ENCODE measurements at regions of chr4 and their contacts with region 1.

Region 1: DNA sequence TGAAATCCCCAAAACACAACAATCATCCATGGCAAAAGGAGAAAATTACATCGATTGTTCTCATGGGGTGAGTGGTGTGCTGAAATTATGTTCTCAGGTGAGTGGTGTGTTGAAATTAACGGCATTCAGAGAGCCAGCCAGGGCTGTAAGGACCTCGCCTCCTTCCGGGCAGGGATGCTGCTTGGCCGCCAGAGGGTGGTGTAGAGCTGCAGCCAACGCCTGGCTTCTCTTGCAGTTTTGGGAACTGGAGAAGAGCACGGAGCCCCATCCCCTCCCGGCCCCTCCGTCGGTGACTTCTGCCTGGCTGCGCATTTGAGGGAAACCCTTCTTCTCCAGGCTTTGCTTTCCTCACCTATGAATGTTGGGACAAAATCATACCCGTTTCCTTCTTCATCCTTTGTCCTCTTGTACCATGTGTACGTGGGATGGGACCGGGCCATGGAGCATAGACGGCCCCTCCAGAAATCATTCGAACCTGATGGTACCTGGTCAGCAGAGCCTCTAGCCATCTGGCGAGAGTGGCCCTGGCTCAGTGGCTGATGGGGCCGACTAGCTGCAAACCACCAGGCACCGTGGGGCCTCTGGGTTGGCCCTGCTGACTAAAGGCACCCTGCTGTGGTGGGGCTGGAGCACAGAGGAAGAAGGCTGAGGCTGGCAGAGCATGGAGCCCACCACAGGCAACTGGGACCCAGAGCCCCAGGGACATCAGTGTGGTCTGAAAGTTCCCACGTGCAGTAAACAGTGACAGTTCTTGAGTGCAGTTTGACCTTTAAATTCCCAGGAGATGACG is 28.4 kb downstream of the TRMT44 start:
- DNase-seq: no peak
- H3K4me3 ChIP-seq: no peak overlapping the region
- H3K27ac ChIP-seq: no peak overlapping the region
- H3K4me1 ChIP-seq: peaks cover 28% of the 10 kb centered on the region
- H3K27me3 ChIP-seq: no peaks in the 10 kb centered on the region
- CTCF ChIP-seq: peak; percentile 50 to 93 (median 83)
- POLR2A ChIP-seq: no peak

Region 2: DNA sequence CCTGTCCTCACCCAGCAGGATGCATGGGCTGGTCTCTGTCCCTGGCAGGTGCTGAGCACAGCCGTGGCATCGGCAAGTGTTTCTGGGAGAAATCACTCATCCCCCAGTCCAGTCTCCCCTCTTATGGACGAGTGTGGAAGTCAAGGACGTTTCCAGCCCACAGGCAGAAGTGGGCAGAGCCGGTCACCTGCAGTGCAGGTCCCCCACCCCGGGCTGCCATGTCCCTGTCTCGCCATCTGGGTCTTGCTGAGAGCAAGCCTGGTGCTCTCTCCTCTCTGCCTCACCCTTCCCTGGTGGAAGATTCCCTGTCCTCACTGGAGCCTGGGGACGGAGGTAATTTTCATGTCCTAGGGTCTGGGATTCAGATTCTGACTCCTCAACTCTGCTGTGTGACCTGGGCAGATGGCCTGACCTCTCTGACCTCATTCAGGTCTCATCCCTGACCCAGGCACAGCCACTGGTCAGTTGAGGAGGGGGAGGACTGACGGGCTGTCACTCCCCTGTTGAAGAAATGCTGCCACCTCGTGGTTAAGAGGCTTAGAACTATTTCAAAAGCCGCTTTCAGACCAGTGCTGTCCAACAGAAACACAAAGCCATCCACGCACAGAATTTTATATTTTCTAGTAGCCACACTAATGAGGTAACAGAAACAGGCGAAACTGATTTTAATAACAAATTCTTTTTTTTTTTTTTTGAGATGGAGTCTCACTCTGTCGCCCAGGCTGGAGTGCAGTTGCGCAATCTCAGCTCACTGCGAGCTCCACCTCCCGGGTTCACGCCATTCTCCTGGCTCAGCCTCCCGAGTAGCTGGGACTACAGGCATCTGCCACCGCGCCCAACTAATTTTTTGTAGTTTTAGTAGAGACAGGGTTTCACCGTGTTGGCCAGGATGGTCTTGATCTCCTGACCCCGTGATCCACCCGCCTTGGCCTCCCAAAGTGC is 125.4 kb after region 1 on chr4:
- intact Hi-C with region 1: loop called (anchors 2 kb)
- DNase-seq: no peak
- H3K4me3 ChIP-seq: peak overlapping the region in 1 of 2 donors; percentile 41
- H3K27ac ChIP-seq: peak overlapping the region; percentile 67
- H3K4me1 ChIP-seq: peaks cover 32% of the 10 kb centered on the region
- H3K27me3 ChIP-seq: no peaks in the 10 kb centered on the region
- CTCF ChIP-seq: peak; percentile 40 to 70 (median 47)
- POLR2A ChIP-seq: no peak